HEK293 (cell line): ENCODE measurements at regions of chr2 and their contacts with region 1.

Region 1: DNA sequence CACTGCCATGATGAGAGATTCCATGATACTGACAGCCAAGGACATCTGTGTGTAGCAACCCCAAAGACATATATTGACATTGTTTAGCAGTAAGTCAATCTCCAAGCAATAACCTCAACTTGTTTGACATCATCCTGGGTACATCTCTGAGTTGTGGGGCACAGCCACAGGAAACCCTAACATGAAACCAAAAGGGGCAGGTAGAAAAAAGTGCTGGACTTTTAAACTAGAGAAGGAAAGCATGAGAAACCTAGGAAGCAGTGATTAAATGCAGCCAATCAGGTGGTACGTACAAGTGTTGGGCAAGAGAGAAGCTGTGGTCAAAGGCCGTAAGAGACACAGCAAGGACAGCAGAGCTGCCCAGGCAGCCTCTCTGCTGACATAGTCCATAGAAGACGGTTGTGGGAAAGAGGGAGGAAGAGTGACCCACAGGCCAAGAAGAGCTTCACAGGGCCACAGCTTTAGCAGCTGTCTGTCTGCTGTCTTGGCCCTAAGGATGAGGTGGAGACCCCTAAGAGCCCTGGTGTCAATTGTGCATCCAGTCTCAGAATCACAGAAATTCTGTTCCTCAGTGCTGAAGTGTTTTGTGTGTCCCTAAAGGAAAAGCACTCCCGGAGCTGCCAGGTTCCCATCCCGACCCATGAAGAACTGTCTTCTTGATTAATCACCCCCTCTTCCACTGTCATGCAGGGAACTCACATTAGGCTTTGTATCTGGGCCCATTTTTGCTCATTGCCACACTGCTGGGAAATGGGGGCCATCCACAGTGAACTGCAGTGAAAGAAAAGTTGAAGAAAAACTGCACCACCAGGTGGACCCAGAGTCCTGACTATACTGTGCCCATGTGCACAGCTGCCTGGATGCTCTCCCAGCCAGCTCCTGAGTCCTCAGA is 25.4 kb upstream of the CHN1 start:
- H3K4me3 ChIP-seq: no peak overlapping the region
- H3K27ac ChIP-seq: no peak overlapping the region
- H3K4me1 ChIP-seq: no peaks in the 10 kb centered on the region
- CTCF ChIP-seq: peak; percentile 59

Region 2: DNA sequence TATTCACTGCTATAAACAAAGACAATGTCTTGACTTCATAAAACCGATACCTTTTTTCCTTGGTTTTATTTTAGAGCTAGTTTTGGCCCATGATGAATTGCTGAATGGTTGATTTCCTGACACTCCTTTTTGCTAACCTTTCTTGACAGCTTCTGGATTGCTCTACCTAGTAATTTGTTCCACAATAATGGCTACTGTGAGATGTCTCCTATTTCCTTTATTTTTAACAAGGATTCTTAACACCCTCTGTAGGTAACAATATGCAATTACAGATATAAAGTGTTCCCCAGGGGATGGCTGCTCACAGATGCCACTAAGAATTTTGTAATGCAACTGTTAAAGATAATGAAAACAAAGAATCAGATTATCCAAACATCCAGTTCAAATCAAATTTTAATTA is 251.7 kb after region 1 on chr2:
- CTCF ChIA-PET with region 1: interaction called, 18 read pairs
- POLR2A ChIA-PET with region 1: no interaction called
- H3K4me3 ChIP-seq: no peak overlapping the region
- H3K27ac ChIP-seq: no peak overlapping the region
- H3K4me1 ChIP-seq: no peaks in the 10 kb centered on the region
- CTCF ChIP-seq: peak; percentile 16; the same call in 1 of the 2 replicates